ENCODE measurements at regions of chr11 and their contacts with region 1.

Region 1: GRCh38 chr11:129922674-129923073 is 27.3 kb upstream of the NFRKB start:
- DNase-seq: no peak
- H3K4me3 ChIP-seq: no peak overlapping the region
- H3K27ac ChIP-seq: no peak overlapping the region
- H3K4me1 ChIP-seq: no peaks in the 10 kb centered on the region
- H3K27me3 ChIP-seq: no peaks in the 10 kb centered on the region
- CTCF ChIP-seq: no peak
- EP300 ChIP-seq: no peak
- POLR2A ChIP-seq: no peak

Region 2: DNA sequence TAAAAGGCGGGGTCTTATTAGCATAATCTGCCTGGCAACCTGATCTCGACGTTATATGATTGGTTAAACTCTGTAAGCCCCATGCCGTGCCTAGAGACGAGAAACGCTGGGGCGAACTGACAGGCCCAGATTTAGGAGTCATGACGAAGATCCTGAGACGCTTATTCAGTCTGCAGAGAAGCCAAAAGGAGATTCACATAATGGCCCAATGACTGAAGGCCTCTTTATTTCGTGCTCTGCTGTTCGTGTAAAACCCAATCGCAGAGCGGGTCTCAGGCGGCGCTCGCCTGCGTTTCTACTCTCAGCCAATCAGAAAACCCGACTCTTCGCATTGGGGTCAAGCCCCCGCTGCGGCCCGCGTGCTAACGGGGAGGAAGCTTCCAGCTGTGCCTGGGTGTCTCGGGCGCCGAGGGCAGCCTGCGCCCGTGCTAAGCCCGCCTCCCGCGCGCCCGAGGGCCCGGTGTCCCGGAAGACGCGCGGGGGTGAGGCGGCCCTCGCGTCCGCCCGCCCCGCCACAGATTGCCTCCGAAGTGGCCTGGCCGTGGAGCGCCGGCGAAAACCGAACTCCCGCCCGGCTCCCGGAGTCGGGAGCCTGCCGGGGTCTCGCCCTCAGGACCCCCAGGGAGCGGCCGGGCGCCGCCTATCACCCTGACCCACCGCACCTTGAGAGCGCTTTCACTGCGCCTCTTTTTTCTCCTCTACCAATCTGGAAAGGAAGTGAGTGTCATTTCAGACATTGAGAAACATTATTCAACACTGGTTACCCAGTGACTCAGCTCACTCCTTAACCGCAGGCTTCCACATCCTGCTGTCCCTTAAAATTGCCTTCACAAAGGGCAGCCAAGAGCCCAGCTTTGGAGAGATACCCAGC is 80.4 kb after region 1 on chr11:
- intact Hi-C with region 1: loop called (anchors 5 kb)
- DNase-seq: peak; percentile 99
- H3K4me3 ChIP-seq: peak overlapping the region; percentile 81 to 94 (median 89)
- H3K27ac ChIP-seq: peak overlapping the region; percentile 97 to 100 (median 98)
- H3K4me1 ChIP-seq: peaks cover 17 to 30% (median 26%) of the 10 kb centered on the region in 4 donors
- H3K27me3 ChIP-seq: no peaks in the 10 kb centered on the region
- CTCF ChIP-seq: peak in 1 of 3 experiments; percentile 14
- EP300 ChIP-seq: no peak
- POLR2A ChIP-seq: peak; percentile 87

Region 3: GRCh38 chr11:130087294-130087926 is 164.7 kb after region 1 on chr11:
- intact Hi-C with region 1: no loop called
- DNase-seq: no peak
- H3K4me3 ChIP-seq: no peak overlapping the region
- H3K27ac ChIP-seq: no peak overlapping the region
- H3K4me1 ChIP-seq: peaks cover 33 to 44% (median 39%) of the 10 kb centered on the region in 4 donors
- H3K27me3 ChIP-seq: no peaks in the 10 kb centered on the region
- CTCF ChIP-seq: no peak
- EP300 ChIP-seq: no peak
- POLR2A ChIP-seq: no peak

Region 4: GRCh38 chr11:130131961-130132850 is 209.5 kb after region 1 on chr11:
- intact Hi-C with region 1: loop called (anchors 1 kb)
- DNase-seq: no peak
- H3K4me3 ChIP-seq: no peak overlapping the region
- H3K27ac ChIP-seq: no peak overlapping the region
- H3K4me1 ChIP-seq: peaks cover 0 to 17% (median 12%) of the 10 kb centered on the region in 4 donors
- H3K27me3 ChIP-seq: no peaks in the 10 kb centered on the region
- CTCF ChIP-seq: peak; percentile 78 to 87 (median 84)
- EP300 ChIP-seq: no peak
- POLR2A ChIP-seq: no peak